ENCODE measurements at regions of chr11 and their contacts with region 1.

Region 1: GRCh38 chr11:47373876-47374720 is 4.2 kb downstream of the SPI1 start:
- DNase-seq: peak; percentile 93
- H3K4me3 ChIP-seq: no peak overlapping the region
- H3K27ac ChIP-seq: no peak overlapping the region
- H3K4me1 ChIP-seq: no peaks in the 10 kb centered on the region
- H3K27me3 ChIP-seq: no peaks in the 10 kb centered on the region
- CTCF ChIP-seq: peak; percentile 100

Region 2: DNA sequence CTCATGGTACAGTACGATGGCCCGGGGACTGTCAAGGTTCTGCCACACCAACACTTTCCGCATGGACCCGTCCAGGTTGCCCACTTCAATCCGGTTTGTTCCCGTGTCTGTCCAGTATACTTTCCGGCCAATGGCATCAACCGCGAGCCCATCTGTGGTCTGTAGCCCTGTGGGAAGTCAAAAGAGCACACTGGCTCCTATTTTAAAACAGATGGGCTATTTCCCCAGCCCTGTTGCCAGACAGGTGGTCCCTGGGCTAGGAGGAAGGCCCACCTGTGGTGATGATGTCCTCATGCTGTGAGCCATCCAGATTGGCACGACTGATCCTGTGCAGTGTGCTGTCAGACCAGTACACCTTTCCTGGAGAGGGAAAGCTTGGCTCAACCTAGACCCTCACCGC is 497.6 kb before region 1 on chr11:
- CTCF ChIA-PET with region 1: no interaction called
- POLR2A ChIA-PET with region 1: no interaction called
- intact Hi-C with region 1: no loop called
- DNase-seq: no peak
- H3K4me3 ChIP-seq: no peak overlapping the region
- H3K27ac ChIP-seq: no peak overlapping the region
- H3K4me1 ChIP-seq: no peaks in the 10 kb centered on the region
- H3K27me3 ChIP-seq: no peaks in the 10 kb centered on the region
- CTCF ChIP-seq: no peak

Region 3: DNA sequence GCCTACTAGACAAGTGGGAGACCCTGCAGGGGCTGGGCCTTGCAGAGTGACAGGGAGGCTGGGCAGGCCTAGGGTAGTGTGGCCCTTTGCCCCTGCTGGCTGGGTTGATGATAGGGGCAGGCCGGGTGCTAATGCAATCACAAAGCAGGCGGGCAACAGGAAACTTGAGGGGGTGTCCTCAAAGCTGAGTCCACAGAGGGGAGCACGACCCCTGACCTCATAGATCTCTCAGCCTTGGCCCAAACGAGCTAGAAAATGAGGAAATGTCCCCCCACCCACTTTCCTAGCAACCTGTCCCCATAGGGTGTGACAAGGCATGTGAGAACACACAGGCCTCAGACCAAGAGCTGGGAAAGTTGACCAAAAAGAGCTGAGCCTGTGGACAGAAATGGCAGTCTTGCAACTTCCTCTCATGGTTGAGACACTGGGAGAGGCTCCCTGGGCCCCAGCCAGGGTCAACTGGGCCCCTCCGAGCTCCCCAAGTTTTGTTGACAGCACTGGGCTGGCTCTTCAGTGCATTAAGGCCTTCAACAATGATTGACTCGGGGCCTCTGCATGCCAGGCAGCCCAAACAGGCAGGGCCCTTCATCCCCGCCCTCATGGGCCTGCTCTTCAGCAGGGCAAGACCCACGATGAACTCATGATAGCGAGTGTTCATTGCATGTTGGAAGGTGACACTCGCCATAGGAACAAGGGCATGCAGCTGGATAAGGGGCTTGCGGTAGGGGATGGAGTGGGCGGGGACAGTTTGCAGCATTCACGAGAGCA is 14.0 kb after region 1 on chr11:
- CTCF ChIA-PET with region 1: interaction called, 11 read pairs
- POLR2A ChIA-PET with region 1: no interaction called
- intact Hi-C with region 1: no loop called
- DNase-seq: no peak
- H3K4me3 ChIP-seq: no peak overlapping the region
- H3K27ac ChIP-seq: no peak overlapping the region
- H3K4me1 ChIP-seq: no peaks in the 10 kb centered on the region
- H3K27me3 ChIP-seq: no peaks in the 10 kb centered on the region
- CTCF ChIP-seq: no peak

Region 4: GRCh38 chr11:47407746-47408590 is 33.9 kb after region 1 on chr11 and contains the start of gene SLC39A13:
- CTCF ChIA-PET with region 1: interaction called, 4 read pairs
- POLR2A ChIA-PET with region 1: no interaction called
- intact Hi-C with region 1: loop called (anchors 1 kb)
- DNase-seq: peak; percentile 99
- H3K4me3 ChIP-seq: peak within 1 kb of the TSS; percentile 70
- H3K27ac ChIP-seq: peak within 1 kb of the TSS; percentile 83
- H3K4me1 ChIP-seq: peaks cover 21% of the 10 kb centered on the region
- H3K27me3 ChIP-seq: no peaks in the 10 kb centered on the region
- CTCF ChIP-seq: peak; percentile 75
- total RNA-seq, gene SLC39A13: 53.3 and 64.2 TPM in 2 replicates

Region 5: GRCh38 chr11:47454180-47454644 is 80.1 kb after region 1 on chr11:
- CTCF ChIA-PET with region 1: interaction called, 5 read pairs
- POLR2A ChIA-PET with region 1: interaction called, 11 read pairs
- intact Hi-C with region 1: loop called (anchors 1 kb)
- DNase-seq: peak; percentile 96
- H3K4me3 ChIP-seq: no peak overlapping the region
- H3K27ac ChIP-seq: no peak overlapping the region
- H3K4me1 ChIP-seq: no peaks in the 10 kb centered on the region
- H3K27me3 ChIP-seq: no peaks in the 10 kb centered on the region
- CTCF ChIP-seq: peak; percentile 99

Region 6: DNA sequence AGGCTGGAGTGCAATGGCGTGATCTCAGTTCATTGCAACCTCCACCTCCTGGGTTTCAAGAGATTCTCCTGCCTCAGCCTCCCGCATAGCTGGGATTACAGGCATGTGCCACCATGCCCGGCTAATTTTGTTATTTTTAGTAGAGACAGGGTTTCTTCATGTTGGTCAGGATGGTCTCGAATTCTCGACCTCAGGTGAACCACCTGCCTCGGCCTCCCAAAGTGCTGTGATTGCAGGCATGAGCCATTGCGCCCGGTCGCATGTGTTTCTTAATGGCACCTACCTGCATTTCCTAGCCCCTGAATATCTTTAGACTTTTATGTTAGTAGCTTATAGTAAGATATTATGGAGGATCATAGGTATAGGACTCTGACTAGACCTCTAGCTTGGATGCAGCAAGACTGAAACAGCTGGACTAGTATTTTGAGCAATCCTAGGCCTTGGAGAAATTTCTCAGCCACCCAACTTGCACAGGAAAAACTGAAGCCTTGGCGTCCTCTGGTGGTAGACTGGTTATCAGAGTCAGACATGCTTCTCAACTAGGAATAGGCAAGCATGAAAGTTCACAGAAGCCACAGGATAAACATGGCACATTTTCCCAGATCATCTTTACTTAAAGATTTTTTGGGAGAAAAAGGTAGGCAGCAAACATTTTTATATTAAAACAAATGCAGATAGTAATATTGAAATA is 242.8 kb after region 1 on chr11:
- CTCF ChIA-PET with region 1: interaction called, 5 read pairs
- POLR2A ChIA-PET with region 1: no interaction called
- intact Hi-C with region 1: loop called (anchors 2 kb)
- DNase-seq: peak; percentile 82
- H3K4me3 ChIP-seq: no peak overlapping the region
- H3K27ac ChIP-seq: no peak overlapping the region
- H3K4me1 ChIP-seq: no peaks in the 10 kb centered on the region
- H3K27me3 ChIP-seq: no peaks in the 10 kb centered on the region
- CTCF ChIP-seq: peak; percentile 93

Region 7: GRCh38 chr11:47847892-47848635 is 474.0 kb after region 1 on chr11 and contains the start of gene NUP160:
- CTCF ChIA-PET with region 1: interaction called, 3 read pairs
- POLR2A ChIA-PET with region 1: no interaction called
- intact Hi-C with region 1: loop called (anchors 5 kb)
- DNase-seq: peak; percentile 93
- H3K4me3 ChIP-seq: peak within 1 kb of the TSS; percentile 62
- H3K27ac ChIP-seq: peak within 1 kb of the TSS; percentile 93
- H3K4me1 ChIP-seq: peaks cover 13% of the 10 kb centered on the region
- H3K27me3 ChIP-seq: no peaks in the 10 kb centered on the region
- CTCF ChIP-seq: 0 out of 2 replicates have a peak, but pooled peaks have one; percentile 27
- total RNA-seq, gene NUP160: 162 and 172 TPM in 2 replicates

Region 8: GRCh38 chr11:47905481-47906059 is 531.5 kb after region 1 on chr11:
- CTCF ChIA-PET with region 1: no interaction called
- POLR2A ChIA-PET with region 1: no interaction called
- intact Hi-C with region 1: no loop called
- DNase-seq: no peak
- H3K4me3 ChIP-seq: no peak overlapping the region
- H3K27ac ChIP-seq: no peak overlapping the region
- H3K4me1 ChIP-seq: no peaks in the 10 kb centered on the region
- H3K27me3 ChIP-seq: no peaks in the 10 kb centered on the region
- CTCF ChIP-seq: no peak

Region 9: GRCh38 chr11:48116437-48117228 is 742.5 kb after region 1 on chr11:
- CTCF ChIA-PET with region 1: no interaction called
- POLR2A ChIA-PET with region 1: no interaction called
- intact Hi-C with region 1: loop called (anchors 10 kb)
- DNase-seq: peak; percentile 50
- H3K4me3 ChIP-seq: no peak overlapping the region
- H3K27ac ChIP-seq: no peak overlapping the region
- H3K4me1 ChIP-seq: no peaks in the 10 kb centered on the region
- H3K27me3 ChIP-seq: no peaks in the 10 kb centered on the region
- CTCF ChIP-seq: peak; percentile 62